ENCODE measurements at regions of chr12 and their contacts with region 1.

Region 1: DNA sequence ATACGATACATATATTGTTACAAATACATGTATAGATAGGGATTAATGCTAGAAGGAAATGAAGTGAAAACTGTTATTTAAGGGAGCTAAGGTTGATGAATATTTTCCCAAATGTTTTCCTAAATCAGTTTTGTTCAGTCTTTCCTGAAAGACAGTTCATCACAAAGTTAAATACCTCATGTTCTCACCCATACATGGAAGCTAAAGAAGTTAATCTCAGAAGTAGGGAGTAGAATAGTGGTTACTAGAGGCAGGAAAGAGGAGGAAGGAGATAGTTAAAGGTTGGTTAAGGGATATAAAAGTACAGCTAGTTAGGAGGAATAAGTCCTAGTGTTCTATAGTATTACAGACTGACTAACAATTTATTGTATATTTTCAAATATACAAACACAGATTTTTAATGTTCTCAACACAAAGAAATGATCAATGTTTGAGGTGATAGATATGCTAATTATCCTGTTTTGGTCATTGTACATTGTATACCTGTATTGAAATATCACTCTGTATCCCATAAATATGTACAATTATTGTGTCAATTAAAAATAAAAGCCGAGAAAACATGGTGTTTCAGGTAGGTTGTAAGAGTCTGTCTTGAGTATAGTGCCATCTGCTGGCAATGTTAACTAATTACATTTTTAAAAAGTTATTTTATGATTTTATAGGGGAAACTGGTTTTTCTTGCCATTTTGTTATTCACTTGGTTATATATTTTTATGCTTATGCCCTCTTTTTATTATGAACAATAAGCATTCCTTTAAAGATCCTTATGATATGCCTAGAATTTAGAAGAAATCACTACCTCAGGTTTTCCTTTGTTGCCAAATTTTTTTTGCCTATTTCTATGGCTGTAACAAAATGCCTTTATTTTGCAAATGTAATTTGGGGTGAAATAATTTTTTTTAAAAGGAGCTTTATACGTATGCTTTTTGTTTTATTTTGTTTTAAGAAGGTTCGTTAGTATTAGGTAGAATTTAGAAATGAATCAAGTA is 26.9 kb downstream of the ZDHHC17 start:
- DNase-seq: no peak
- ATAC-seq: peak in 3 of 4 donors; percentile 50 to 75 (median 65)
- H3K4me3 ChIP-seq: no peak overlapping the region
- H3K27ac ChIP-seq: peak overlapping the region; percentile 30
- H3K4me1 ChIP-seq: peaks cover 45% of the 10 kb centered on the region
- H3K27me3 ChIP-seq: no peaks in the 10 kb centered on the region
- CTCF ChIP-seq: peak; percentile 84

Region 2: GRCh38 chr12:76685246-76685678 is 105.6 kb before region 1 on chr12:
- intact Hi-C with region 1: loop called in 1 of 2 experiments (anchors 5 kb)
- DNase-seq: peak in 1 of 2 donors; percentile 19
- ATAC-seq: peak in 3 of 4 donors; percentile 24 to 69 (median 35)
- H3K4me3 ChIP-seq: no peak overlapping the region
- H3K27ac ChIP-seq: no peak overlapping the region
- H3K4me1 ChIP-seq: no peaks in the 10 kb centered on the region
- H3K27me3 ChIP-seq: no peaks in the 10 kb centered on the region
- CTCF ChIP-seq: no peak

Measured in psoas muscle (tissue), 8 donors.